ENCODE measurements at regions of chr10 and their contacts with region 1.

Region 1: GRCh38 chr10:22280078-22280477 is 36.1 kb upstream of the COMMD3 start:
- DNase-seq: no peak
- ATAC-seq: 0 out of 6 replicates have a peak, but pooled peaks of 1 of the 2 experiments have one; percentile 8
- H3K4me3 ChIP-seq: no peak overlapping the region
- H3K27ac ChIP-seq: no peak overlapping the region
- H3K4me1 ChIP-seq: no peaks in the 10 kb centered on the region
- CTCF ChIP-seq: no peak
- EP300 ChIP-seq: no peak
- POLR2A ChIP-seq: no peak
- RAD21 ChIP-seq: no peak

Region 2: GRCh38 chr10:22174442-22174841 is 105.6 kb before region 1 on chr10:
- CTCF ChIA-PET with region 1: no interaction called
- POLR2A ChIA-PET with region 1: no interaction called
- DNase-seq: no peak
- ATAC-seq: no peak
- H3K4me3 ChIP-seq: no peak overlapping the region
- H3K27ac ChIP-seq: no peak overlapping the region
- H3K4me1 ChIP-seq: no peaks in the 10 kb centered on the region
- CTCF ChIP-seq: no peak
- EP300 ChIP-seq: no peak
- POLR2A ChIP-seq: no peak
- RAD21 ChIP-seq: no peak

Region 3: GRCh38 chr10:22340362-22341189 is 60.5 kb after region 1 on chr10:
- CTCF ChIA-PET with region 1: no interaction called
- POLR2A ChIA-PET with region 1: no interaction called
- DNase-seq: peak; percentile 76 to 85
- ATAC-seq: peak; percentile 79 to 81
- H3K4me3 ChIP-seq: peak overlapping the region; percentile 73
- H3K27ac ChIP-seq: peak overlapping the region; percentile 92 to 99
- H3K4me1 ChIP-seq: peaks cover 15% of the 10 kb centered on the region; the same call in 1 of the 3 replicates
- CTCF ChIP-seq: 0 out of 3 replicates have a peak, but pooled peaks have one; percentile 2
- EP300 ChIP-seq: no peak
- POLR2A ChIP-seq: peak; percentile 40
- RAD21 ChIP-seq: no peak; a peak in 1 of 5 replicates

Region 4: GRCh38 chr10:22758867-22759266 is 478.8 kb after region 1 on chr10:
- CTCF ChIA-PET with region 1: no interaction called
- POLR2A ChIA-PET with region 1: interaction called, 11 read pairs
- DNase-seq: no peak
- ATAC-seq: no peak
- H3K4me3 ChIP-seq: no peak overlapping the region
- H3K27ac ChIP-seq: no peak overlapping the region
- H3K4me1 ChIP-seq: peaks cover 5% of the 10 kb centered on the region; the same call in 1 of the 3 replicates
- CTCF ChIP-seq: no peak
- EP300 ChIP-seq: no peak
- POLR2A ChIP-seq: no peak
- RAD21 ChIP-seq: no peak